ENCODE measurements at regions of chr2 and their contacts with region 1.

Region 1: DNA sequence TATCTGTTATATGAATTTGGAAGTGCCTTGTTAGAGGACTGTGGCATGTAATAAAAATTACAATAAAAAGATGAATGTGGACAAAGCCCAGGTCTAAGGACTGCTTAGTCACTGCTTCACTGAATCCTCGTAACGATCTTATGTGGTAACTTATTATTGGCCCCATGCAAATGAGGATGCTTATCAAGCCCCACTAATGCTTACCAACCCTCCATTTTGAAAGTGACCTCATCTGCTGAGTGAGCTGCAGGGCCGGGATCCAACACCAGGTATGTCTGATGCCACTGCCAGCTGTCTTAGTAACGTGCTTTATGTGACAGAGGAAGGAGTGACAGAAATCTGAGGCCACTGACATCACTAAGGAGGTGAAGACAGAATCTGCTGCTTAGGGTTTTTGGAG is 65.3 kb upstream of the CCDC85A start:
- DNase-seq: peak; percentile 28
- ATAC-seq: no peak
- H3K4me3 ChIP-seq: peak overlapping the region; percentile 17; the same call in 1 of the 2 replicates
- H3K27ac ChIP-seq: no peak overlapping the region
- H3K4me1 ChIP-seq: no peaks in the 10 kb centered on the region; the same call in 1 of the 2 replicates
- H3K27me3 ChIP-seq: peaks cover 89% of the 10 kb centered on the region
- CTCF ChIP-seq: no peak

Region 2: GRCh38 chr2:56099963-56100362 is 18.5 kb before region 1 on chr2:
- CTCF ChIA-PET with region 1: no interaction called
- POLR2A ChIA-PET with region 1: no interaction called
- intact Hi-C with region 1: loop called (anchors 2 kb)
- DNase-seq: no peak
- ATAC-seq: no peak
- H3K4me3 ChIP-seq: no peak overlapping the region
- H3K27ac ChIP-seq: no peak overlapping the region
- H3K4me1 ChIP-seq: no peaks in the 10 kb centered on the region
- H3K27me3 ChIP-seq: peaks cover 55% of the 10 kb centered on the region
- CTCF ChIP-seq: no peak

Measured in PC-3 (cell line).